PC-9 (cell line): ENCODE measurements at regions of chr16 and their contacts with region 1.

Region 1: GRCh38 chr16:4915226-4915761 is 21.7 kb downstream of the PPL start:
- DNase-seq: peak; percentile 76 to 95
- H3K4me3 ChIP-seq: no peak overlapping the region
- H3K27ac ChIP-seq: peak overlapping the region; percentile 89
- H3K4me1 ChIP-seq: peaks cover 76% of the 10 kb centered on the region
- H3K27me3 ChIP-seq: no peaks in the 10 kb centered on the region
- CTCF ChIP-seq: no peak

Region 2: DNA sequence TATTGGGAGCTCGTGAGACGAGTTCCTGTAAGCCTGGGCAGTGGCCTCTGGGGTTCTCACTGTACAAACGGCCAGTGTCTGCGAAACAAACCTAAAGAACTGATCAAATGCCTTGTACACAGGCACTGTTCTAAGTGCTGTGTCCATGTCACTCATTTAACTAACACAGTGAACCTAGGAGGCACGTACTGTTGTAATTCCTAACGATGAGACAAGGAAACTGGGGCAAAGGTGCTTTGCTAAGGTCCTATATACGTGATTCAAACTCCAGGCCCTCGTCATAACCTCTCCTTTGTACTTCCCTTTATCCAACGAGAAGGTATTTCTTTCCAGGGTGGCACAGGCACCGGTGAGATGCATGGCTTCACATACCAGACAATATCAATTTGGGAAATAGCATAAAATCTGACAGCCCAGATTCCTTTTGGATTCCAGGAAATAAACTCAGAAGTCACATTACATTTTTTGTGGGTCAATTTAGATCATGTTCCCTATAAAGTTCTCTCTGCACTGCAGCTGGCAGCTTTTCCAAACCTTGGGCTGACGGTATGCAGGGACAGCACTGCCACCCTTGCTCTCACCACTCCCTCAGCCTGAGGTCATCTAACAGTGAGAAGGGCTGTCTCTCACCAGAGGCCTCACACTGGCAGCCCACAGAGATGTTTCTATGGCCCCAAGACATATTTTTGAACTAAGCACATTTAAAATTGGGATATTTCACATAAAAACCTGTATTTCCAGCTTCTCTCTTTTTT is 86.5 kb before region 1 on chr16:
- CTCF ChIA-PET with region 1: no interaction called
- POLR2A ChIA-PET with region 1: no interaction called
- intact Hi-C with region 1: no loop called
- DNase-seq: no peak
- H3K4me3 ChIP-seq: no peak overlapping the region
- H3K27ac ChIP-seq: no peak overlapping the region
- H3K4me1 ChIP-seq: no peaks in the 10 kb centered on the region
- H3K27me3 ChIP-seq: no peaks in the 10 kb centered on the region
- CTCF ChIP-seq: no peak

Region 3: DNA sequence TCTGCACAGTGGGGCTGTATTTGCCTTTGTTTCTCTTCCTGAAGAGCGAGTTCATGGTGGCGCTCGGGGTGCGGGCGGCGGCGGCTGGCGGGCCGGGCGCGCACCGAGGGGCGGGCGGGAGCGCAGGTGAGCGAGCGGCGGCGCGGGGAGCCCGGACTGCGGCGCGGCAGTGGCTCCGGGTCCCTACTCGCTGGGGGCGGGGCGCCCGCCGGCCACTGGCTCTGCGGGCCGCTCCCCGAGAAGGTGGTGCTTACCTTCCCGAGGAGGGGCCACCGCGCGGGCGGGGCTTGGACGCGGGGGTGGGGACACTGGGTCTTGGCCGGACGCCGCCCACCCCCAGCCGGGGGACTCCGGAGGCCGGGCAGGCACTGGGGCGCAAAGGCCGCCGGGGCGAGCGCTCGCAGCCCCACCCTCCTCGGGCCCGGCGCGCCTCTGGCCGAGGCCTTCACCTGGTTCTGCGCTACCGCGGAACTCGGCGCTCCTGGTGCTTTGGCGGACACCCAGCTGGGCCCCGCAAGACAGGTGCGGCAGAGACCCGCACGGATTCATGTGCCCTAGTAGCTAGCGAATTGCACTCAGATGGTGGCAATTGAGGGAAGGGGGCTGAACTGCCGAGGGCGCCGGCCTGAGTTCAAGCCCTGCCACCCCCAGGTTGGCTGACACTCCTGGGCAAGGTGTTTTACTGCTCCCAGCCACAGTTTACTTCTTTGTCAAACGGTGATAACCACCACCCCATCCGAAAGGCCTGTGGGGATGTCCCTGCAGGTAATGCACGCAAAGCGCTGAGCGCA is 21.9 kb after region 1 on chr16 and contains the start of gene PPL:
- CTCF ChIA-PET with region 1: interaction called, 5 read pairs
- POLR2A ChIA-PET with region 1: interaction called, 4 read pairs
- intact Hi-C with region 1: loop called (anchors 1 kb)
- DNase-seq: peak; percentile 87 to 100
- H3K4me3 ChIP-seq: peak within 1 kb of the TSS; percentile 99
- H3K27ac ChIP-seq: peak within 1 kb of the TSS; percentile 38; the same call in 1 of the 2 replicates
- H3K4me1 ChIP-seq: peaks cover 36% of the 10 kb centered on the region
- H3K27me3 ChIP-seq: no peaks in the 10 kb centered on the region
- CTCF ChIP-seq: no peak
- total RNA-seq, gene PPL: 184 and 187 TPM in 2 replicates

Region 4: GRCh38 chr16:5709889-5710288 is 794.6 kb after region 1 on chr16:
- CTCF ChIA-PET with region 1: no interaction called
- POLR2A ChIA-PET with region 1: no interaction called
- intact Hi-C with region 1: no loop called
- DNase-seq: peak in 1 of 2 experiments; percentile 1
- H3K4me3 ChIP-seq: no peak overlapping the region
- H3K27ac ChIP-seq: no peak overlapping the region
- H3K4me1 ChIP-seq: no peaks in the 10 kb centered on the region
- H3K27me3 ChIP-seq: no peaks in the 10 kb centered on the region
- CTCF ChIP-seq: no peak